SK-N-SH (cell line): ENCODE measurements at regions of chr4 and their contacts with region 1.

Region 1: DNA sequence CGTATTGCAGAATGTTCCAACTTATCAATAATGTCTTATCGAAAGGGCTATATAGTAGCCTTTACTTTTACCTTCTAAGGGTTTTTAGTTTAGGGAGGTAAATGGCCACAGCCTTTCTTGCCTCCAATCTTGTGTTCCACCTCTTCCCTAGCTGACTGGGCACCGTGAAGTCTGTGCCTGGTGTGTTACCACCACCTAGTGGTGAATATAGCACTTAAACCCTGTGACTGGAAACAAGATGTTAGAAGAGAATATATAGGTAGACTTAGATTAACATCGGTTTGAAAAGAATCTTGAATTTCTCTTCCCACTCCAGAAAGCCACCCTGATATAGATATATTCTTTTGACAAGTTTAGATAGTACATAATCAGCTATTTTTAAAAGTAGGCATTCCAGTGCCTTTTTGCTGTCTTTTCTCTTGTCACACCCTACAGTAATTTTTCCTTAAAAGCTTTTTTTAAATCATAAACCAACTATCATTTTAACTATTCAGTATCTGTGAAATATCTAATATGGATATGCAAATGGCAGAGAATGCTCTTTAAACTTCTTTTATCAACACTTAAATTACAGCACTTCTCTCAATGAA is 27.8 kb upstream of the ADH7 start:
- DNase-seq: peak; percentile 54
- H3K4me3 ChIP-seq: peak overlapping the region in 1 of 2 experiments; percentile 24; a peak in 1 of 4 replicates
- H3K27ac ChIP-seq: no peak overlapping the region
- H3K4me1 ChIP-seq: no peaks in the 10 kb centered on the region; a peak in 1 of 4 replicates
- H3K27me3 ChIP-seq: no peaks in the 10 kb centered on the region; the same call in 1 of the 2 replicates
- CTCF ChIP-seq: peak; percentile 86
- EP300 ChIP-seq: no peak
- RAD21 ChIP-seq: peak; percentile 94

Region 2: GRCh38 chr4:99405433-99406115 is 57.4 kb before region 1 on chr4:
- CTCF ChIA-PET with region 1: interaction called, 18 read pairs
- POLR2A ChIA-PET with region 1: no interaction called
- DNase-seq: peak; percentile 24
- H3K4me3 ChIP-seq: peak overlapping the region in 1 of 2 experiments; percentile 38; a peak in 1 of 4 replicates
- H3K27ac ChIP-seq: peak overlapping the region in 1 of 2 experiments; percentile 77; a peak in 2 of 4 replicates
- H3K4me1 ChIP-seq: peaks cover 0 to 13% of the 10 kb centered on the region in 2 experiments; a peak in 2 of 4 replicates
- H3K27me3 ChIP-seq: no peaks in the 10 kb centered on the region
- CTCF ChIP-seq: peak; percentile 97
- EP300 ChIP-seq: no peak
- RAD21 ChIP-seq: peak; percentile 94

Region 3: GRCh38 chr4:99439481-99439880 is 23.5 kb before region 1 on chr4:
- CTCF ChIA-PET with region 1: interaction called, 10 read pairs
- POLR2A ChIA-PET with region 1: no interaction called
- DNase-seq: no peak
- H3K4me3 ChIP-seq: no peak overlapping the region
- H3K27ac ChIP-seq: no peak overlapping the region
- H3K4me1 ChIP-seq: no peaks in the 10 kb centered on the region
- H3K27me3 ChIP-seq: no peaks in the 10 kb centered on the region
- CTCF ChIP-seq: no peak
- EP300 ChIP-seq: no peak
- RAD21 ChIP-seq: no peak

Region 4: GRCh38 chr4:99483636-99484035 is 20.7 kb after region 1 on chr4:
- CTCF ChIA-PET with region 1: interaction called, 10 read pairs
- POLR2A ChIA-PET with region 1: no interaction called
- DNase-seq: no peak
- H3K4me3 ChIP-seq: no peak overlapping the region
- H3K27ac ChIP-seq: no peak overlapping the region
- H3K4me1 ChIP-seq: no peaks in the 10 kb centered on the region
- H3K27me3 ChIP-seq: no peaks in the 10 kb centered on the region
- CTCF ChIP-seq: no peak
- EP300 ChIP-seq: no peak
- RAD21 ChIP-seq: no peak

Region 5: DNA sequence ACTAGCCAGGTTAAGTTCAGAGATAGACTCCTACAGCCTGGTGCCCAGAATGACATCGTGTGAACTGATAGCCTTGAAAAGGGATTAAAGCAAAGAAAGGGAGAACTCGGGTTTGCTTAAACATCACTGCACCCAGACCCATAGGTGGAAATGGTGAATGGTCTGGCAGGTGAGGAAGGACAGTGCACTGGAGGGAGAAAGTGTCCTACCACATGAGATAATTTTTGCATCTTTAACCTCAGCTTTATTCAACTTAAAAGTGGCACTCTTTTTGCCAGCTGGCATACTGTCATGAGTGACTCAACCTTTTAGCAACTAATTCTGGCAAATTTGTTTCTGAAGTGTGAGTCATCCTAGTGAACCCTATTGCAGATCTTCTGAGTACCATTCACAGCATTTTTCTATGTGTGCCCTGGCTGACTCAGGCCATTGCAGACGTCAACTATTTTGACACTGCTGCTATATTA is 300.7 kb after region 1 on chr4:
- CTCF ChIA-PET with region 1: no interaction called
- POLR2A ChIA-PET with region 1: no interaction called
- DNase-seq: no peak
- H3K4me3 ChIP-seq: no peak overlapping the region
- H3K27ac ChIP-seq: peak overlapping the region in 1 of 2 experiments; percentile 38; a peak in 2 of 4 replicates
- H3K4me1 ChIP-seq: peaks cover 0 to 17% of the 10 kb centered on the region in 2 experiments; a peak in 1 of 4 replicates
- H3K27me3 ChIP-seq: no peaks in the 10 kb centered on the region
- CTCF ChIP-seq: no peak
- EP300 ChIP-seq: peak in 1 of 2 experiments; percentile 84; a peak in 2 of 4 replicates
- RAD21 ChIP-seq: no peak